GM12878 (cell line): ENCODE measurements at regions of chr6 and their contacts with region 1.

Region 1: GRCh38 chr6:122422614-122423267 is 23.3 kb downstream of the HSF2 start:
- DNase-seq: peak; percentile 15
- ATAC-seq: peak; percentile 85
- H3K4me3 ChIP-seq: no peak overlapping the region
- H3K27ac ChIP-seq: no peak overlapping the region
- H3K4me1 ChIP-seq: 0 out of 2 replicates have a peak, but pooled peaks cover 3% of the 10 kb centered on the region
- H3K27me3 ChIP-seq: no peaks in the 10 kb centered on the region
- CTCF ChIP-seq: no peak
- EP300 ChIP-seq: peak in 1 of 2 experiments; percentile 65; a peak in 2 of 4 replicates
- POLR2A ChIP-seq: no peak
- RAD21 ChIP-seq: no peak

Region 2: GRCh38 chr6:121890307-121890910 is 532.3 kb before region 1 on chr6:
- CTCF ChIA-PET with region 1: no interaction called
- POLR2A ChIA-PET with region 1: no interaction called
- RAD21 ChIA-PET with region 1: no interaction called
- SMC1A ChIA-PET with region 1: no interaction called
- in situ Hi-C with region 1: no loop called
- intact Hi-C with region 1: no loop called
- DNase-seq: no peak
- ATAC-seq: no peak
- H3K4me3 ChIP-seq: no peak overlapping the region
- H3K27ac ChIP-seq: no peak overlapping the region
- H3K4me1 ChIP-seq: no peaks in the 10 kb centered on the region
- H3K27me3 ChIP-seq: no peaks in the 10 kb centered on the region
- CTCF ChIP-seq: no peak
- EP300 ChIP-seq: no peak
- POLR2A ChIP-seq: no peak
- RAD21 ChIP-seq: no peak

Region 3: GRCh38 chr6:121901432-121901831 is 521.3 kb before region 1 on chr6:
- CTCF ChIA-PET with region 1: no interaction called
- POLR2A ChIA-PET with region 1: no interaction called
- RAD21 ChIA-PET with region 1: no interaction called
- SMC1A ChIA-PET with region 1: no interaction called
- in situ Hi-C with region 1: no loop called
- intact Hi-C with region 1: no loop called
- DNase-seq: no peak
- ATAC-seq: no peak
- H3K4me3 ChIP-seq: no peak overlapping the region
- H3K27ac ChIP-seq: no peak overlapping the region
- H3K4me1 ChIP-seq: no peaks in the 10 kb centered on the region
- H3K27me3 ChIP-seq: no peaks in the 10 kb centered on the region
- CTCF ChIP-seq: no peak
- EP300 ChIP-seq: no peak
- POLR2A ChIP-seq: no peak
- RAD21 ChIP-seq: no peak

Region 4: GRCh38 chr6:122339661-122340060 is 83.1 kb before region 1 on chr6:
- CTCF ChIA-PET with region 1: no interaction called
- POLR2A ChIA-PET with region 1: no interaction called
- RAD21 ChIA-PET with region 1: no interaction called
- SMC1A ChIA-PET with region 1: no interaction called
- in situ Hi-C with region 1: no loop called
- intact Hi-C with region 1: no loop called
- DNase-seq: no peak
- ATAC-seq: no peak
- H3K4me3 ChIP-seq: no peak overlapping the region
- H3K27ac ChIP-seq: no peak overlapping the region
- H3K4me1 ChIP-seq: no peaks in the 10 kb centered on the region
- H3K27me3 ChIP-seq: no peaks in the 10 kb centered on the region
- CTCF ChIP-seq: no peak
- EP300 ChIP-seq: no peak
- POLR2A ChIP-seq: no peak
- RAD21 ChIP-seq: no peak

Region 5: GRCh38 chr6:122459213-122459612 is 36.5 kb after region 1 on chr6:
- CTCF ChIA-PET with region 1: interaction called, 3 read pairs
- POLR2A ChIA-PET with region 1: no interaction called
- RAD21 ChIA-PET with region 1: no interaction called
- SMC1A ChIA-PET with region 1: no interaction called
- in situ Hi-C with region 1: no loop called
- intact Hi-C with region 1: loop called (anchors 5 kb)
- DNase-seq: no peak
- ATAC-seq: no peak
- H3K4me3 ChIP-seq: no peak overlapping the region
- H3K27ac ChIP-seq: no peak overlapping the region
- H3K4me1 ChIP-seq: no peaks in the 10 kb centered on the region
- H3K27me3 ChIP-seq: no peaks in the 10 kb centered on the region
- CTCF ChIP-seq: no peak
- EP300 ChIP-seq: no peak
- POLR2A ChIP-seq: no peak
- RAD21 ChIP-seq: no peak